WTC11 (cell line): ENCODE measurements at regions of chr1 and their contacts with region 1.

Region 1: GRCh38 chr1:10430216-10431069 is at the start of gene CENPS:
- DNase-seq: peak; percentile 94
- ATAC-seq: peak; percentile 89
- H3K4me3 Mint-ChIP-seq: peak within 1 kb of the TSS; percentile 77
- H3K27ac Mint-ChIP-seq: peak within 1 kb of the TSS; percentile 94
- H3K4me1 Mint-ChIP-seq: peaks cover 19% of the 10 kb centered on the region
- H3K27me3 Mint-ChIP-seq: no peaks in the 10 kb centered on the region
- CTCF ChIP-seq: peak; percentile 93
- total RNA-seq, gene CENPS: 13.7 to 17.0 TPM (median 13.8 TPM) in 3 replicates

Region 2: DNA sequence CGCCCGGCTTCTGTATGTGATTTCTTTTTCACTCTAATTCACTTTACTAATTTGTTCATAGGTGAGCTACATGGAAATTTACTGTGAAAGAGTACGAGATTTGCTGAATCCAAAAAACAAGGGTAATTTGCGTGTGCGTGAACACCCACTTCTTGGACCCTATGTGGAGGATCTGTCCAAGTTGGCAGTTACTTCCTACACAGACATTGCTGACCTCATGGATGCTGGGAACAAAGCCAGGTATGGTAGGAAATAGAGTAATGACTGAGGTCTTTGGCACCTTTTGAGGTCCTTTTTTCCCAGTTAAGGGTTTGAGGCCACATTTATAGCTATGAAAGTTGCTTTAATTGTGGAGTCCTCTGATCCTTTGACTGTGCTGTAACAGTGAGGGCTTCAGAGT is 163.1 kb before region 1 on chr1:
- CTCF ChIA-PET with region 1: no interaction called
- POLR2A ChIA-PET with region 1: no interaction called
- DNase-seq: no peak
- ATAC-seq: no peak
- H3K4me3 Mint-ChIP-seq: no peak overlapping the region
- H3K27ac Mint-ChIP-seq: no peak overlapping the region; the same call in 1 of the 2 replicates
- H3K4me1 Mint-ChIP-seq: no peaks in the 10 kb centered on the region
- H3K27me3 Mint-ChIP-seq: no peaks in the 10 kb centered on the region
- CTCF ChIP-seq: no peak

Region 3: GRCh38 chr1:10398734-10399623 is 31.5 kb before region 1 on chr1 and contains the start of gene PGD:
- CTCF ChIA-PET with region 1: interaction called, 15 read pairs
- POLR2A ChIA-PET with region 1: interaction called, 8 read pairs
- DNase-seq: peak; percentile 99
- ATAC-seq: peak; percentile 94
- H3K4me3 Mint-ChIP-seq: peak within 1 kb of the TSS; percentile 96
- H3K27ac Mint-ChIP-seq: peak within 1 kb of the TSS; percentile 95
- H3K4me1 Mint-ChIP-seq: peaks cover 12% of the 10 kb centered on the region
- H3K27me3 Mint-ChIP-seq: no peaks in the 10 kb centered on the region; the same call in 1 of the 2 replicates
- CTCF ChIP-seq: no peak
- total RNA-seq, gene PGD: 270 to 278 TPM (median 272 TPM) in 3 replicates

Region 4: GRCh38 chr1:10444248-10444647 is 13.8 kb after region 1 on chr1:
- CTCF ChIA-PET with region 1: interaction called, 14 read pairs
- POLR2A ChIA-PET with region 1: no interaction called
- DNase-seq: no peak
- ATAC-seq: no peak
- H3K4me3 Mint-ChIP-seq: no peak overlapping the region
- H3K27ac Mint-ChIP-seq: peak overlapping the region; percentile 36; the same call in 1 of the 2 replicates
- H3K4me1 Mint-ChIP-seq: no peaks in the 10 kb centered on the region
- H3K27me3 Mint-ChIP-seq: no peaks in the 10 kb centered on the region
- CTCF ChIP-seq: no peak

Region 5: GRCh38 chr1:10451287-10451686 is 20.8 kb after region 1 on chr1:
- CTCF ChIA-PET with region 1: interaction called, 35 read pairs
- POLR2A ChIA-PET with region 1: interaction called, 5 read pairs
- DNase-seq: no peak
- ATAC-seq: peak; percentile 40
- H3K4me3 Mint-ChIP-seq: peak overlapping the region; percentile 25
- H3K27ac Mint-ChIP-seq: peak overlapping the region; percentile 3
- H3K4me1 Mint-ChIP-seq: peaks cover 23% of the 10 kb centered on the region
- H3K27me3 Mint-ChIP-seq: no peaks in the 10 kb centered on the region; the same call in 1 of the 2 replicates
- CTCF ChIP-seq: no peak

Region 6: DNA sequence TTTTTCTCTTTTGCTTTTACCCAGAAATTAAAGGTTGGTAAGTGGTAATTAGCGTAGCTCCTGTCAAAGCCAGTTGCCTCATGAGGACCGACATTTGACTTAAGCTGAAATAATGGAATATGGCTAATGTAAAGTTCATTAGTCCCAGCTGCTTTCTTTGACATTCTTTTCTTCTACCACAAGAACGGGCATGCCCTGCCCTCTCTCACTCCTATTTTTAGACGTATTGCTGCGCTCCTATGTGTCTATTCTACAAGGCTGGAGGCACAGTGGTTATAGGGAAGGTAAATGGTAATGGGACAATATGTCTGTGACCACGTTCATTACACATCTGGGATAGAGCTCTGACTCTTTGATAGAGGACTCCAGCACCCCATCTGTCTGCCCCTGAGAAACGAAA is 26.2 kb after region 1 on chr1:
- CTCF ChIA-PET with region 1: interaction called, 35 read pairs
- POLR2A ChIA-PET with region 1: interaction called, 5 read pairs
- DNase-seq: no peak
- ATAC-seq: no peak
- H3K4me3 Mint-ChIP-seq: no peak overlapping the region
- H3K27ac Mint-ChIP-seq: peak overlapping the region; percentile 70
- H3K4me1 Mint-ChIP-seq: peaks cover 3% of the 10 kb centered on the region
- H3K27me3 Mint-ChIP-seq: no peaks in the 10 kb centered on the region; the same call in 1 of the 2 replicates
- CTCF ChIP-seq: no peak

Region 7: DNA sequence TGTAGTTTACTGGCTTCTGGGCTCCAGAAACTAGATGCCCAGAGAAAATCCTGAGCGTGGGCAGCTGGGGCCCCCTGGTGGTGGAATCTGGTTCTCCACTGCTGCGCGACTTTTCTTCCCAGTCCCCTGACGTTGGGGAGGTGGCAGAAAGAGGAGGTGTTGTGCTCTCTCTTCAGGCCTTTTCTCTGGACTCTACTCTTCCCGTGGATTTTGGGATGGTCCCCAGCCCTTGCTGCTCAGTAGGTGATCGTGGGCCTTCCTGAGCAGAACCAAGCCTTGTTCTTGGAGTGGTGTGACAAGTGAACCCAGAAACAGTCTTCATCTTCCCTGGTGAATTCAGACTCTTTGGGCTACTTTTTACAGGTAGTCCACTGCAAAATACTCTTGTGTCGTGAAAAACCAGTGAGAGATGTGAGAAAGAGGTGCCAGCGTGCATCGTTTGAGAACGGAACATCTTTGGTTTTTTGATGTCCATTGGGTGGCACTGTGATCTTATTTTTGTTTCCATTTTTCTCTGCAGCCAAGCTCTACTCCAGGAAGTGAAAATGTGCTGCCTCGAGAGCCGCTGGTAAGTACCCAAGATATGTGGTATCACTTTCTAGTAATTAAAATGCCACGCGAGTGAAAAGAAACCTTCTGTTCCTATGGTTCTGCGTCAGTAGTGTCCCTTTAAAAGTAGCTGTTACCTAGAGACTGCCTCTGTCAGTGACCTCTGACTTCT is 64.5 kb after region 1 on chr1:
- CTCF ChIA-PET with region 1: interaction called, 39 read pairs
- POLR2A ChIA-PET with region 1: no interaction called
- DNase-seq: peak; percentile 84
- ATAC-seq: peak; percentile 88
- H3K4me3 Mint-ChIP-seq: no peak overlapping the region
- H3K27ac Mint-ChIP-seq: peak overlapping the region; percentile 67
- H3K4me1 Mint-ChIP-seq: peaks cover 15% of the 10 kb centered on the region
- H3K27me3 Mint-ChIP-seq: no peaks in the 10 kb centered on the region
- CTCF ChIP-seq: peak; percentile 97